Cardiac septum (tissue), 1 donor: ENCODE measurements at regions of chr4 and their contacts with region 1.

Region 1: DNA sequence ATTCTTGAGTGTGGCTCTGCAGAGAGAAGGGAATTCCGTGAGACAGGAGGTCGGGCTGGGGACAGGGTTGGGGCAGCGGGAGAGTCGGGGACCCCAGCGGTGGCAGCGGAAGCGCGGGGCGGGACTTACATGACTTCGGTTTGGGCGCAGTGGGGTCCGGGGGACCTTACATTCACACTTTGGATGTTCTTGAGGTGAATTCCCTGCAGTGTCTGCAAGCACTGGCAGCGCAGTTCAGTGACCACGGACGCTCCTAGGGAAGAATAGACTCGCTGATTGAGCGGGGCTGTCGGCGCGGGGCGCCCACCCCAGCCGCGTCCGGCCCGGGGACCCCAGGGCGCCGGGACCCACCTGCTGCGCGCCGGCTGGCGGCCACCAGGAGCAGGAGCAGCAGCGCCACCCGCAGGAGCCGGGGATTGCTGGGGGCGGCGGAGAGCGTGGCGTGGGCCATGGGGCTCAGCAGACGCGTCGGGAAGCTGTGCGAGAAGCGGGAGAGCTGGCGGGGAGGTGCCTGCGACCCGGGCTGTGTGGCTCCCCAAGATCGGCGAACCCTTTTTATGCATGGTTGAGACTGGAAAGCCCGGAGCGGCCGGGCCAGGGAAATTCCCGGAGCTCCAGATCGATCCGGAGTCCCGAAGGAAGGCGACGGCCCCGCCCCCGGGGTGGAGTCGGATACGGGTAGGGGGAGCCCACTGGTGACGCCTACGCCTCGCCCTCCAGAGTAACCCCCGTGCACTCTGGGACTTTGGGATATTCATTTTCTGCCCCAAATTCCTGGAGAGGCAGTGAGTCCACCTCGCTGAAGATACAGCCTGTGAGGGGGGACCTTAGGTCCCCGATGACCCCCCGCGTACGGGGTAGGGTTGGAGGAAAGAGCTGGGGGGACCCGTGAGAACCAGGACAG is at the start of gene CXCL3:
- DNase-seq: peak; percentile 86
- total RNA-seq, gene CXCL3: 0.43 TPM

Region 2: GRCh38 chr4:73729534-73730165 is 308.8 kb before region 1 on chr4:
- intact Hi-C with region 1: loop called (anchors 10 kb)
- DNase-seq: no peak